K562 (cell line): ENCODE measurements at regions of chr1 and their contacts with region 1.

Region 1: DNA sequence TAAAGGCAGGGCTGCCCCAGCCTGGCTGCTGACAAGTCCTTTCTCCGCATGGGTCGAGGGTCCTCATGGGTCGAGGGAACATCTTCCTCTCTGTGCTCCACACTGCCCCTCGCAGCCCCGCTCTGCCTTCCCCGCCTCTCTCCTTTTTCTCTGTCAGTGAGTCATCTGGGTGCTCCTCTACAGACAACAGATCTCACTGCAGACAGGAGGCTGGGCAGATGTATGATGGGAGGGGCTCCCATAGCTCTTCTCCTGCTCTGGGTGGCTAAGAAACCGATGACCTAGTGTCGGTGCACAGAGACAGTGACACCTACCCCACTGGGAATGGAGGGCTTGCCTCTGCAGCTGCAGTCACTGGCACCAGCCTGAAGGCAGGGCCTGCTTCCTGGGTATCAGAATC is 5.5 kb downstream of the KCNA10 start:
- DNase-seq: peak in 2 of 4 experiments; percentile 18 to 39
- ATAC-seq: peak; percentile 82
- H3K4me3 ChIP-seq: no peak overlapping the region
- H3K27ac ChIP-seq: no peak overlapping the region
- H3K4me1 ChIP-seq: no peaks in the 10 kb centered on the region
- H3K27me3 ChIP-seq: peaks cover 4 to 46% of the 10 kb centered on the region in 2 experiments
- CTCF ChIP-seq: no peak
- EP300 ChIP-seq: no peak
- POLR2A ChIP-seq: no peak
- RAD21 ChIP-seq: no peak

Region 2: GRCh38 chr1:110990536-110990935 is 477.0 kb after region 1 on chr1:
- CTCF ChIA-PET with region 1: no interaction called
- POLR2A ChIA-PET with region 1: no interaction called
- in situ Hi-C with region 1: loop called (anchors 10 kb)
- intact Hi-C with region 1: no loop called
- DNase-seq: no peak
- ATAC-seq: no peak
- H3K4me3 ChIP-seq: no peak overlapping the region
- H3K27ac ChIP-seq: no peak overlapping the region
- H3K4me1 ChIP-seq: no peaks in the 10 kb centered on the region
- H3K27me3 ChIP-seq: peaks cover 0 to 12% of the 10 kb centered on the region in 2 experiments; a peak in 2 of 5 replicates
- CTCF ChIP-seq: no peak
- EP300 ChIP-seq: no peak
- POLR2A ChIP-seq: no peak
- RAD21 ChIP-seq: no peak